Caco-2 (cell line): ENCODE measurements at regions of chr4 and their contacts with region 1.

Region 1: GRCh38 chr4:11428899-11429698 is 405 bp upstream of the HS3ST1 start:
- DNase-seq: peak; percentile 87 to 91
- H3K4me3 ChIP-seq: peak overlapping the region; percentile 71
- H3K4me3 Mint-ChIP-seq: peak overlapping the region; percentile 90
- H3K27ac Mint-ChIP-seq: peak overlapping the region; percentile 91
- H3K4me1 ChIP-seq: no peaks in the 10 kb centered on the region
- H3K4me1 Mint-ChIP-seq: no peaks in the 10 kb centered on the region
- H3K27me3 ChIP-seq: no peaks in the 10 kb centered on the region
- H3K27me3 Mint-ChIP-seq: no peaks in the 10 kb centered on the region
- CTCF ChIP-seq: peak; percentile 67 to 81

Region 2: GRCh38 chr4:10582059-10582686 is 846.9 kb before region 1 on chr4:
- CTCF ChIA-PET with region 1: no interaction called
- POLR2A ChIA-PET with region 1: no interaction called
- intact Hi-C with region 1: loop called (anchors 1 kb)
- DNase-seq: peak; percentile 46 to 47
- H3K4me3 ChIP-seq: no peak overlapping the region
- H3K4me3 Mint-ChIP-seq: no peak overlapping the region
- H3K27ac Mint-ChIP-seq: no peak overlapping the region
- H3K4me1 ChIP-seq: peaks cover 20% of the 10 kb centered on the region
- H3K4me1 Mint-ChIP-seq: peaks cover 9% of the 10 kb centered on the region
- H3K27me3 ChIP-seq: no peaks in the 10 kb centered on the region
- H3K27me3 Mint-ChIP-seq: no peaks in the 10 kb centered on the region
- CTCF ChIP-seq: peak; percentile 69 to 72

Region 3: DNA sequence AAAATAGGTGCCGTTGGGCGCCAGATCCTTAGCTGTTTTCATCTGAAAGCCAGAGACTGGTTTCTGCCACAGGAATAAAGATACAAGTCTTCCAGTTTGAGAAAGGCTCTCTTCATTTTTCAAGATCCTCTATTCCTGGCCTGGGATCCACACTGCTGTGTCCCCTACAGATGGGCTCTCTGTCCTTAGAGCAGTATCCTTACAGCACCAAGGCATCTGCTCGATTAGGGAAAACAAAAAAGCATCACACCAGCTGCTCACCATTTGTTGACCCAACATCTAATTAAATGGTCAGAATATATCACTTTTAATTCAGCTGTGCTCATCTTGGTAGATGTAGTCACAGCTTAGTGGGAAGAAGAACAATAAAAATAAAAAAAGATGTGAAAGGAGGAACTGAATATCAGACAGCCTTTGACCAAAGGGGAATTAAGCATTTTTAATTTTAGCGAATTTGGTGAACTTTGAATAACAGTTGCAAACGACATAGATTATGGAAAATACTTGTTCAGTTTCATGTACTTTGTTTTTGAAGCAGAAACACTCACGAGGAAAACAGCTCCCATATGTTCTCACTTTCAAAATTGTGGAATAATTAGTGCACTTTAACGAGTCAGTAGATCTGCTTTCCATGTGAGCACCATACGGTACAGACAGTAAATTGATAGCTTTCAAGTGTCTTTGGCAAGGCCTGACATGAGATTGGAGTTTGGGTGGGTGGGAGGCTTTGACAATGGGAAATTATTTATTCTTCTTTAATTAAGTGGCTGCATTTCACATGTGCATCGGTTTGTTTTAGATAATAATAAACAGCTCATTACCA is 596.1 kb before region 1 on chr4:
- CTCF ChIA-PET with region 1: no interaction called
- POLR2A ChIA-PET with region 1: no interaction called
- intact Hi-C with region 1: loop called (anchors 10 kb)
- DNase-seq: no peak
- H3K4me3 ChIP-seq: no peak overlapping the region
- H3K4me3 Mint-ChIP-seq: no peak overlapping the region
- H3K27ac Mint-ChIP-seq: no peak overlapping the region
- H3K4me1 ChIP-seq: peaks cover 52% of the 10 kb centered on the region
- H3K4me1 Mint-ChIP-seq: peaks cover 41% of the 10 kb centered on the region
- H3K27me3 ChIP-seq: no peaks in the 10 kb centered on the region
- H3K27me3 Mint-ChIP-seq: no peaks in the 10 kb centered on the region
- CTCF ChIP-seq: no peak

Region 4: DNA sequence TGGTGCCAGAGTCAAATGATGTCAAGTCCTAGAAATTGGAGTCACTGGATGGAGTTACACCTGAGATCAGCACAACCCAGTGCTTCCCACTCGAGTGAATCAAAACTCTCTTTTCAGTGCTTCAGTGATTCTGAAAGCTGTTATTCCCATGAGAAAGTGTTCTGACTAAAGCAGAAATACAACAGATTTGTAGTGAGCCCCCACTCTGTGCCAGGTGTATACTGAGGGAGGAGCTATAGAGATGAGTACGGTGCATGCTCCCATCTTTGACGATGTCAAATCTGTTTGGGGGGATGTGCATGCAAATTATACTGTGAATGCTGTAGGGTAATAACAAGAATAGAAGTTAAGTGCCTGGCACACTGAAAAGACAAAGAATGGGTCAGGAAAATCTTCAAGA is 330.6 kb before region 1 on chr4:
- CTCF ChIA-PET with region 1: no interaction called
- POLR2A ChIA-PET with region 1: interaction called, 3 read pairs
- intact Hi-C with region 1: loop called (anchors 10 kb)
- DNase-seq: no peak
- H3K4me3 ChIP-seq: no peak overlapping the region
- H3K4me3 Mint-ChIP-seq: no peak overlapping the region
- H3K27ac Mint-ChIP-seq: no peak overlapping the region
- H3K4me1 ChIP-seq: peaks cover 6% of the 10 kb centered on the region
- H3K4me1 Mint-ChIP-seq: peaks cover 11% of the 10 kb centered on the region
- H3K27me3 ChIP-seq: no peaks in the 10 kb centered on the region
- H3K27me3 Mint-ChIP-seq: no peaks in the 10 kb centered on the region
- CTCF ChIP-seq: no peak

Region 5: DNA sequence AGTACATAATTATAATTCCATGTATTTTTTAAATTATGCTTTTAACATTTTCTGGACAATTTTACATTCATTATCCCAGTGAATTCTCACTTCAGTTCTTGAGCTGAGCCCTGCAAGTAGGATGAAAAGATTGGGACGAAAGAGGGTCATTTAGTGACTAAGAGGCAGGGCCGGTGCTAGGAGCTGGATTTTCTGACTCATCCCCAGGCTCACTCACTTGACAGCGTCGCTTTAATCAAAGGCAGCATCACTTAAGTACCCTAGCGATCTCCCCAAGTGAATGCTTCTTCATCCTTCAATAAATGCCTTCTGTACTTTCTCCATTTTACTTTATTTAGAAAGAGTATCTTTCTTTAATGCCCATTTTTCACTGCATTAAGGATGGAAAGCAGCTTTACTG is 264.0 kb before region 1 on chr4:
- CTCF ChIA-PET with region 1: no interaction called
- POLR2A ChIA-PET with region 1: no interaction called
- intact Hi-C with region 1: no loop called
- DNase-seq: no peak
- H3K4me3 ChIP-seq: no peak overlapping the region
- H3K4me3 Mint-ChIP-seq: no peak overlapping the region
- H3K27ac Mint-ChIP-seq: no peak overlapping the region
- H3K4me1 ChIP-seq: no peaks in the 10 kb centered on the region
- H3K4me1 Mint-ChIP-seq: no peaks in the 10 kb centered on the region
- H3K27me3 ChIP-seq: no peaks in the 10 kb centered on the region
- H3K27me3 Mint-ChIP-seq: no peaks in the 10 kb centered on the region
- CTCF ChIP-seq: no peak

Region 6: DNA sequence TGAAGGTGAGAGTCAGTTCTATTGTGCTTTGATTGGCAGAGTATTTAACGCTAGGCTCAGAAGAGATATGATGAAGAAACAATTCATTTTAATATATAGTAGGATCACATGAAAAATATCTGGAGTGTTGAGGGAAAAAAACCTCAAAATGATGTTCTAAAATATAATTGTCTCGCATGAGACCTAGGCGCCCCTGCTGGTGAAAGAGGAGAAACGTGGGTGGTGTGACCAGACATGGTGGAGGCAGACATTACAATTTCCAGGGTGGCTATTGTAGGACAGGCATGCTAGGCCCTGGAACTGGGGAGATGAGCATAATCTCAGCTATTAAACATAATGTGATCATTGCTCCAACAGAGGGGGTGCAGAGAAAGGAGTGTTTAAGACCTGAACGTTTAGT is 210.4 kb before region 1 on chr4:
- CTCF ChIA-PET with region 1: no interaction called
- POLR2A ChIA-PET with region 1: no interaction called
- intact Hi-C with region 1: loop called (anchors 10 kb)
- DNase-seq: no peak
- H3K4me3 ChIP-seq: no peak overlapping the region
- H3K4me3 Mint-ChIP-seq: no peak overlapping the region
- H3K27ac Mint-ChIP-seq: no peak overlapping the region
- H3K4me1 ChIP-seq: peaks cover 9% of the 10 kb centered on the region; the same call in 1 of the 2 replicates
- H3K4me1 Mint-ChIP-seq: peaks cover 13% of the 10 kb centered on the region
- H3K27me3 ChIP-seq: no peaks in the 10 kb centered on the region
- H3K27me3 Mint-ChIP-seq: no peaks in the 10 kb centered on the region
- CTCF ChIP-seq: peak; percentile 25 to 26

Region 7: DNA sequence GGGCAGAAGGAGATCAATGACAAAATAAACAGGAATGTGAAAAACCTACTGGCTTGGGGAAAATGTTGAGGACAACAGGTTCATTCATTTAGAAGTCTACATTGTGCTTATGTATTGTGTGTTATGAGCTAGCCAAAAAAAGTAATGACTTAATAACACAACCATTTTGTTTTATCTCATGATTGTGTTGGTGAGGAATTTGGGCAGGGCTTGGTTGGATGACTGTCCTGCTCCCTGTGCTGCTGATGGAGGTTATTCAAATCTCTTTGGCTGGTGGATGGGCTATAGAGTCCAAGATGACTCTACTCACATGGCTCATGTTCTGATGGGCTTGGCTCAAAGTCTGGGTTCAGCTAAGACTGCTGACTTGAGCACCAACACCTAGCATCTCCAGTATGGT is 116.7 kb before region 1 on chr4:
- CTCF ChIA-PET with region 1: no interaction called
- POLR2A ChIA-PET with region 1: no interaction called
- intact Hi-C with region 1: no loop called
- DNase-seq: no peak
- H3K4me3 ChIP-seq: no peak overlapping the region
- H3K4me3 Mint-ChIP-seq: no peak overlapping the region
- H3K27ac Mint-ChIP-seq: no peak overlapping the region
- H3K4me1 ChIP-seq: no peaks in the 10 kb centered on the region
- H3K4me1 Mint-ChIP-seq: peaks cover 5% of the 10 kb centered on the region
- H3K27me3 ChIP-seq: no peaks in the 10 kb centered on the region
- H3K27me3 Mint-ChIP-seq: no peaks in the 10 kb centered on the region
- CTCF ChIP-seq: no peak

Region 8: GRCh38 chr4:11326021-11326420 is 103.1 kb before region 1 on chr4:
- CTCF ChIA-PET with region 1: no interaction called
- POLR2A ChIA-PET with region 1: no interaction called
- intact Hi-C with region 1: no loop called
- DNase-seq: no peak
- H3K4me3 ChIP-seq: no peak overlapping the region
- H3K4me3 Mint-ChIP-seq: no peak overlapping the region
- H3K27ac Mint-ChIP-seq: no peak overlapping the region
- H3K4me1 ChIP-seq: no peaks in the 10 kb centered on the region
- H3K4me1 Mint-ChIP-seq: no peaks in the 10 kb centered on the region
- H3K27me3 ChIP-seq: no peaks in the 10 kb centered on the region
- H3K27me3 Mint-ChIP-seq: no peaks in the 10 kb centered on the region
- CTCF ChIP-seq: no peak

Region 9: DNA sequence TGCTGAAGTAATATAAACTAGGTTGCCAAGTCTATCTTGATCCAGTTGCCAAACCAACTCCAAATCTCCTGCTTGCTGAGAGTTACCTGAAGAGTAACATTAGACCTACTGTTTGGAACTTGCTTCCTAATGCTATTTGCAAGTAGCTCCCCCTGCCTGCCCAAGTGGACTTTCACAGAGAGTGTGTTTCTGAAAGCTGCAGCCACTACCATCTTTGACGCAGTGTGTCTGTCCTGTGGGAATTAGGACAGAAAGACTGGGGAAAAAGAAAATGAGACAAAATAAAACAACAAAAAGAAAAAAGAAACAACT is 194.6 kb after region 1 on chr4:
- CTCF ChIA-PET with region 1: no interaction called
- POLR2A ChIA-PET with region 1: no interaction called
- intact Hi-C with region 1: loop called (anchors 2 kb)
- DNase-seq: peak; percentile 39 to 53
- H3K4me3 ChIP-seq: no peak overlapping the region
- H3K4me3 Mint-ChIP-seq: no peak overlapping the region
- H3K27ac Mint-ChIP-seq: no peak overlapping the region
- H3K4me1 ChIP-seq: peaks cover 25% of the 10 kb centered on the region
- H3K4me1 Mint-ChIP-seq: peaks cover 21% of the 10 kb centered on the region
- H3K27me3 ChIP-seq: no peaks in the 10 kb centered on the region
- H3K27me3 Mint-ChIP-seq: no peaks in the 10 kb centered on the region
- CTCF ChIP-seq: peak; percentile 46 to 53